Heart right ventricle (tissue), 16 donors: ENCODE measurements at regions of chr19 and their contacts with region 1.

Region 1: GRCh38 chr19:48588670-48589399 is 17.7 kb upstream of the SPACA4 start:
- DNase-seq: peak; percentile 89 to 94
- ATAC-seq: peak; percentile 77 to 90 (median 88)
- H3K4me3 ChIP-seq: peak overlapping the region in 9 of 10 donors; percentile 21 to 52 (median 47)
- H3K27ac ChIP-seq: peak overlapping the region in 2 of 10 donors; percentile 0 to 74
- H3K4me1 ChIP-seq: peaks cover 0 to 15% (median 8%) of the 10 kb centered on the region in 9 donors
- H3K27me3 ChIP-seq: no peaks in the 10 kb centered on the region
- CTCF ChIP-seq: peak; percentile 80 to 98 (median 94)

Region 2: GRCh38 chr19:48255376-48256303 is 333.2 kb before region 1 on chr19 and contains the start of gene CARD8:
- intact Hi-C with region 1: loop called in 1 of 10 experiments (anchors 10 kb)
- DNase-seq: peak; percentile 68 to 88
- ATAC-seq: peak; percentile 90 to 96 (median 95)
- H3K4me3 ChIP-seq: peak within 1 kb of the TSS; percentile 44 to 71 (median 64)
- H3K27ac ChIP-seq: peak within 1 kb of the TSS; percentile 60 to 99 (median 94)
- H3K4me1 ChIP-seq: peaks cover 4 to 70% (median 43%) of the 10 kb centered on the region in 9 donors
- H3K27me3 ChIP-seq: no peaks in the 10 kb centered on the region
- CTCF ChIP-seq: no peak
- total RNA-seq, gene CARD8: 19.5 to 49.5 (median 29.4) TPM

Region 3: DNA sequence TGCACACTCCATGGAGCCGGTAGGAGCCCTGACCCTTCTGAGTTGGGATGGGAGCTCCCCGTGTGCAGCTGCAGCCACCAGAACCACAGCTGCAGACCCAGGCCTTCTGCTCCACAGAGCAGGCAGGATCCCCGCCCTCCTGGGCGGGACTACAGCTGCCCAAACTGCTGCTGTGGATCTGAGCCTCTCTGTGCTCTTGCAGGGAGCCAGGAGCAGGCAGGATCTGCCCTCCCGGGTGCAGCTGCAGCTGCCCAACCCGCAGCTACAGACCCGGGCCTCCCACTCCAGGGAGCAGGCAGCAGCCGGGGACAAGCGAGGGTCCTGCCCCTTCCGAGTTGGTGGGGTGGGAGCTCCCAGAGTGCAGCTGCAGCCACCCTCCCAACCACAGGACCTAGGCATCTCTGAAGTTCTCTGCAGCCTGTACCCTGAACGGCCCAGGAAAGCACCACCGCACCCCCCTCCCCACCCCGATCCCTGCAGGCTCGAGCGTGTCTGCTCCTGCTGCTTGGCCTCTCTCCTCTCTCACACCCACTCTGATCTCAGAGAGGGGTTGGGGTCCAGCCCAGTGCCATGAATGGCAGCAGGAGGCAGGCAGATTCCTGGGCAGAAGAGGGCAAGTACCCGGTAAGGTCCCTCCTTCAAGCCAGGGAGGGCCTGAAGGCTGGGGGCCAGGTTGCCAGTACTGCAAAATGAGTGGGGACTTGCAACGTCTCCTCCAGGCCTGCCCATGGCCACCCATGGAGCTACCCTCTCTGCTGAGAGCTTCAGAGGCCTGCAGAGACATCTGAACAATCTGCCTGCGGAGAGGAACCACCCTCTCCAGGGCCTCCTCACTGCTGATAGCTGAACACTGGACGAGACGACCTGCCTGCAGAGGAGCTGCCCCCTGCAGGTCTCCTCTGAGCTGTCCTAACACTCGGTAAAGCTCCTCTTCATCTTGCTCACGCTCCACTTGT is 279.9 kb before region 1 on chr19:
- intact Hi-C with region 1: loop called in 4 of 10 experiments (anchors 5 to 10 kb)
- DNase-seq: no peak
- ATAC-seq: peak; percentile 16 to 55 (median 42)
- H3K4me3 ChIP-seq: no peak overlapping the region
- H3K27ac ChIP-seq: peak overlapping the region in 6 of 10 donors; percentile 45 to 81 (median 64)
- H3K4me1 ChIP-seq: peaks cover 7 to 31% (median 18%) of the 10 kb centered on the region in 9 donors
- H3K27me3 ChIP-seq: no peaks in the 10 kb centered on the region
- CTCF ChIP-seq: peak in 5 of 9 donors; percentile 12 to 34 (median 28)

Region 4: DNA sequence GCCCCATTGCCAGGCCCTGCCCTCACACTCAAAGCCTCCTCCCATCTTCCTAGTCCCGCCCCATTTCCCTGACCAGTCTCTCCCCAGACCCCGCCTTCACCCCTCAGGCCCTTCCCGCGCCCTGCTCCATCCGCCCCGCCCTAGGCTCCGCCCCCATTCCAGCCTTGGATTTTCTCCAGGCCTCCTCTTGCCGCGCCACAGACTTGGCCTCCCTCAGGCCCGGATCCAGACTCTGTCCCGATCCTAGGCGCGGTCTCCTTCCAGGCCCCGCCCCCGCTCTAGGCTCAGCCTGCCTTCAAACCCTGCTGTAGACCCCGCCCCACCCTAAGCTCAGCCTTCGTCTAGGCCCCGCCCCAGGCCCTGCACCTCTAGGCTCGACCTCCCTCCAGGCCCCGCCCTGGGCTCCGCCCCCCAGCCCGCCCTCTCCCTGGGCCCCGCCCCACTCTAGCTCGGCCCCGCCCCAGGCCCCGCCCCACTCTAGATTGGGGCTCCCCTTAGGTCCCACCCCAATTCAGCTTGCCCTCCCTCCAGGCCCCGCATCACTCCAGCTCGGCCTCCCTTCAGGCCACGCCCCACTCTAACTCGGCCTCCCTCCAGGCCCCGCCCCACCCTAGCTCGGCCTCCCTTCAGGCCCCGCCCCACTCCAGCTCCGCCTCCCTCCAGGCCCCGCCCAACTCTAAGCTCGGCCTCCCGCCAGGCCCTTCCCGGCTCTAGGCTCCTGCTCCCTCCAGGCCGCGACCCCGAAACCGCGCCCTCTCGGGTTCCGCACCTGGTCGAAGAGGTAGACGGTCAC is 95.7 kb before region 1 on chr19:
- intact Hi-C with region 1: loop called in 9 of 10 experiments (anchors 1 to 5 kb)
- DNase-seq: peak; percentile 95
- ATAC-seq: peak; percentile 86 to 94 (median 89)
- H3K4me3 ChIP-seq: peak overlapping the region in 9 of 10 donors; percentile 25 to 62 (median 57)
- H3K27ac ChIP-seq: peak overlapping the region in 9 of 10 donors; percentile 25 to 83 (median 67)
- H3K4me1 ChIP-seq: peaks cover 2 to 52% (median 30%) of the 10 kb centered on the region in 9 donors
- H3K27me3 ChIP-seq: peaks cover 0 to 62% (median 18%) of the 10 kb centered on the region in 7 donors
- CTCF ChIP-seq: no peak

Region 5: GRCh38 chr19:48618916-48619691 is 30.3 kb after region 1 on chr19 and contains the starts of genes RPL18 and SPHK2:
- intact Hi-C with region 1: loop called in 1 of 10 experiments (anchors 1 kb)
- DNase-seq: peak; percentile 97 to 98
- ATAC-seq: peak; percentile 90 to 95 (median 93)
- H3K4me3 ChIP-seq: peak within 1 kb of the TSS; percentile 74 to 95 (median 81)
- H3K27ac ChIP-seq: peak within 1 kb of the TSS; percentile 64 to 93 (median 88)
- H3K4me1 ChIP-seq: peaks cover 18 to 60% (median 37%) of the 10 kb centered on the region in 9 donors
- H3K27me3 ChIP-seq: no peaks in the 10 kb centered on the region
- CTCF ChIP-seq: peak in 1 of 9 donors; percentile 9
- total RNA-seq, gene RPL18: 493 to 753 (median 543) TPM
- total RNA-seq, gene SPHK2: 5.7 to 13.0 (median 7.7) TPM